GM12878 (cell line): ENCODE measurements at regions of chr11 and their contacts with region 1.

Region 1: DNA sequence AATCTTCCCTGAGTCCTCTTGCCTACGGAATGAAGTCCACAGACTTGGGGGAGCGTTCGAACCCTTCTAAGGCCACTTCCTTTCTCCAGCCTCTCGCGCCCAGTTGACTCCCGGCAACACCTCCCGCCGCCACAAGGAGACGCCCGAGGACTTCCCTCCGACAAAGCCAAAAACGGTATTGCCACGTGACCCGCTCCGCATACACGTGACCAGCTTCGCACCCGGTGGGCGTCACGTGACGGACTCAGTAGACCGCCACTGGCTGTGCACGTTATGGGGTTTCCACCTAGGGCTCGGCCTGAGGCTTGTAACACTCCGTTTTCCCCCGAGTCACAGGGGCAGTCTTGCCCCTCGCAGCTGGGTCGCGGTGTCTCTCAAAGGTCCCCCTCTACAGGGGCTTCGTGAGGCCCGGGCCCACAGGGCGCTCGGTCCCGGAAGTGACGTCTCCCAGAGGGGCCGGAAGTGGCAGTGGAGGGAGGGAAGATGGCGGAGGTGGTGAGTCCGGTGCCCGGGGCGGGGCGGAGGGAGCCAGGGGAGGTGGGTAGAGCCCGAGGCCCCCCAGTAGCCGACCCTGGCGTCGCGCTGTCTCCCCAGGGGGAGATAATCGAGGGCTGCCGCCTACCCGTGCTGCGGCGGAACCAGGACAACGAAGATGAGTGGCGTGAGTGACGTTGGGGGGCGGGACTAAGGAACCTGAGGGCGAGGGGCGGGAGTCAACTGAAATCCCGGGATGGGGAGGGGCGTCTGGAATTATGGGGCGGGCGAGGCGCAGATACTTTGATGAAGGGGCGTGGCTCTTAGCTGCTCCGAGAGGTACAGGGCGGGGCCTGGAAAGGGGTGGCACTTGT is at the start of gene KAT5:
- DNase-seq: peak; percentile 94
- ATAC-seq: peak; percentile 89
- H3K4me3 ChIP-seq: peak within 1 kb of the TSS; percentile 85
- H3K27ac ChIP-seq: peak within 1 kb of the TSS; percentile 99
- H3K4me1 ChIP-seq: peaks cover 8% of the 10 kb centered on the region
- H3K27me3 ChIP-seq: no peaks in the 10 kb centered on the region
- CTCF ChIP-seq: peak; percentile 99 to 100 (median 100); a peak in 5 of 6 replicates
- EP300 ChIP-seq: peak in 1 of 2 experiments; percentile 16; a peak in 1 of 4 replicates
- POLR2A ChIP-seq: peak; percentile 92
- RAD21 ChIP-seq: peak; percentile 90
- polyA plus RNA-seq, gene KAT5: 3.4 to 10.2 TPM

Region 2: DNA sequence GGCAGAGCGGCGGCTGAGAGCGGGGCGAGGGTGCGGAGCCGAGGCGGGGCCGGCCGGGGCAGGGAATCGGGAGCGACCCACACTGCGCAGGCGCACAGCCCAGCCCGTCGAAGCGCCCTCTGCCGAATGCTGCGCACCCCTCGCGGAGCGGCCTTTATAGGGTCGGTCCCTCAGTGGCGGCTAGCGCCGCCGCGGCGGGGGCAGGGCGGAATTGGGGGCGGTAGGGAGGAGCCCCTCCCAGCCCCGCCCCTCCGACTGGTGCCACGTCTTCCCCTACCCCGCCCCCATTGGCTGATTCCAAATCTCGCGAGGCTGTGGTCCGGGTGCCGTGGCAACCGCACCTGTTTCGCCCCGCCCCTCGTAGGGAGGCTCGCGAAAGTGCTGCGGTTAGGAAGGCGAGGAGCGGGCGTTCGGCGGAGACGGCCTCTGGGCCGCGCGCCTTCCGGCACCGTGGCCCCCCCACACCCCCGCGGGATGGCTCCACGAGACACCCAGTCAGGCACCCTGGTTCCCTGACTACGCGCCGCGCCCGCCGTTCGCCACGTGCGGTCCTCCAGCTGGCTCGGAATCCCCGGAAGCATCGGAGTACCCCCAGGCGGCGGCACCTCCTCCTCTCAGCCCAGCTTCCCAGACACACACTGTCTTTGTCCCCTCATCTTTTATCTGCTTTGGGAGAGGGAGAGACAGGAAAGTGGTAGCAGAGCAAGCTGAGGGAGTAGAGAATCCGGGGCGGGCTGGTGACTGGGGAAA is 833.3 kb before region 1 on chr11 and contains the start of gene EHD1:
- CTCF ChIA-PET with region 1: no interaction called
- POLR2A ChIA-PET with region 1: no interaction called
- RAD21 ChIA-PET with region 1: no interaction called
- SMC1A ChIA-PET with region 1: no interaction called
- in situ Hi-C with region 1: no loop called
- intact Hi-C with region 1: loop called (anchors 10 kb)
- DNase-seq: peak; percentile 92
- ATAC-seq: peak; percentile 78
- H3K4me3 ChIP-seq: peak within 1 kb of the TSS; percentile 96
- H3K27ac ChIP-seq: peak within 1 kb of the TSS; percentile 97
- H3K4me1 ChIP-seq: peaks cover 30% of the 10 kb centered on the region
- H3K27me3 ChIP-seq: no peaks in the 10 kb centered on the region
- CTCF ChIP-seq: peak; percentile 41 to 91 (median 54); a peak in 5 of 6 replicates
- EP300 ChIP-seq: 0 out of 4 replicates have a peak, but pooled peaks of 1 of the 2 experiments have one; percentile 35
- POLR2A ChIP-seq: peak; percentile 100
- RAD21 ChIP-seq: no peak
- polyA plus RNA-seq, gene EHD1: 1.0 to 2.2 TPM

Region 3: GRCh38 chr11:65662799-65663638 is 49.0 kb before region 1 on chr11 and contains the start of gene RELA:
- CTCF ChIA-PET with region 1: interaction called, 13 read pairs
- POLR2A ChIA-PET with region 1: interaction called, 6 read pairs
- RAD21 ChIA-PET with region 1: interaction called, 6 read pairs
- SMC1A ChIA-PET with region 1: interaction called, 3 read pairs
- in situ Hi-C with region 1: no loop called
- intact Hi-C with region 1: no loop called
- DNase-seq: no peak
- ATAC-seq: peak; percentile 84
- H3K4me3 ChIP-seq: peak within 1 kb of the TSS; percentile 91
- H3K27ac ChIP-seq: peak within 1 kb of the TSS; percentile 98
- H3K4me1 ChIP-seq: peaks cover 9% of the 10 kb centered on the region
- H3K27me3 ChIP-seq: no peaks in the 10 kb centered on the region
- CTCF ChIP-seq: no peak
- EP300 ChIP-seq: 0 out of 4 replicates have a peak, but pooled peaks of 1 of the 2 experiments have one; percentile 24
- POLR2A ChIP-seq: peak; percentile 79
- RAD21 ChIP-seq: no peak
- polyA plus RNA-seq, gene RELA: 5.1 to 12.8 TPM

Region 4: DNA sequence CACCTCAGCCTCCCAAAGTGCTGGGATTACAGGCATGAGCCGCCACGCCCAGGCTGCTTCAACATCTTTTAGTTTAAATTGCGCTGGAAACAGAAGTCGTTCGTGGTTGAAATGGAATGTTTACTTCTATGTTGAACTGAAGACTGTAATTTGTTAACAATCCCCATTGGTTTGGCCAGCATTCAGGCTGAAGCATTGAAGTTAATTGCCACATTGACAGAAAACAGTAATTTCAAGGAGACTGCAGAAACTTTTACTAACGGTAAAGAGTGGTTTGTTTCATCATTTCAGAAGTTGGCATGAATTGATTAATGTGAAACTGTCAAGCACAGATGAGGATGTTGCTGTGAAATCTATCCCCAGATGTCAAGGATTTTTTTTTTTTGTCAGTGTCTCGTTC is 54.5 kb after region 1 on chr11:
- CTCF ChIA-PET with region 1: interaction called, 35 read pairs
- POLR2A ChIA-PET with region 1: interaction called, 6 read pairs
- RAD21 ChIA-PET with region 1: interaction called, 6 read pairs
- SMC1A ChIA-PET with region 1: interaction called, 10 read pairs
- in situ Hi-C with region 1: no loop called
- intact Hi-C with region 1: no loop called
- DNase-seq: no peak
- ATAC-seq: no peak; the same call in 2 of the 3 replicates
- H3K4me3 ChIP-seq: no peak overlapping the region
- H3K27ac ChIP-seq: no peak overlapping the region
- H3K4me1 ChIP-seq: no peaks in the 10 kb centered on the region
- H3K27me3 ChIP-seq: no peaks in the 10 kb centered on the region
- CTCF ChIP-seq: no peak
- EP300 ChIP-seq: no peak
- POLR2A ChIP-seq: no peak
- RAD21 ChIP-seq: no peak

Region 5: DNA sequence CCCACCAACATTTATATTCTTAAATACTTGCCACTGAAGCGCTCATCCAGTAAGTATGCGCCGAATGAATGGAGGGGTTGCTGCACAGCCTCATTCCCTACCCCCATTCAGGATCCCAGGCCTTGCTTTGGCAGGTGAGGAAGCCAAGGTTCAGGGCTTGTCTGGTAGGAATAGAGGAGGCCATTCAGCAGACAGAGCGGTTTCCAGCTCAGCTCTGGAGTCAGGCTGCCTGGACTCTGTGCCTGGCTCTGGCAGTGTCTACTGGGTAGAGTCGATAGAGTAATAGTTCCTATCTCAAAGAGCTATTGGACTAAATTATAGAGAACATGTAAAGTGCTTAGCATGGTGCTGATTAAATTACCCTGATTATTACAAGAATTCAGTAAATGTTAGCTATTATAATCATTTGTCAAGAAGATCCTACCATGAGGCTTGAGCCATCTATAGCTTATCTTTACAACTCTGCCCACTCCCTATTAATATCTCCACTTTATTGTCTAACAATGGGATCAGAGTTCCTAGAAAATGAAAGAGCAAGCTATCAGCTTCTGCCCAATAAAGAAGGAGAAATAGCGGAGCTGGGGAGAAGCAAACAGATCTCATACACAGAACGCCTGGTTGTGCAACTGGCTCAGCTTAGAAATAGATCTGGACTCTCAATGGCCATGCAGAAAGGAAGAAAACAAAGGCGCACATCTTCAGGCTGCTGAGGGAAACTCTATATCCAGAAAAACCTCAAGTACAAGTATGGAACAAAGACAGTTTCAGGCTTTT is 115.1 kb after region 1 on chr11:
- CTCF ChIA-PET with region 1: interaction called, 20 read pairs
- POLR2A ChIA-PET with region 1: interaction called, 3 read pairs
- RAD21 ChIA-PET with region 1: no interaction called
- SMC1A ChIA-PET with region 1: interaction called, 3 read pairs
- in situ Hi-C with region 1: loop called (anchors 5 kb)
- intact Hi-C with region 1: no loop called
- DNase-seq: no peak
- ATAC-seq: no peak
- H3K4me3 ChIP-seq: no peak overlapping the region
- H3K27ac ChIP-seq: no peak overlapping the region
- H3K4me1 ChIP-seq: no peaks in the 10 kb centered on the region
- H3K27me3 ChIP-seq: 0 out of 4 replicates have a peak, but pooled peaks cover 0 to 3% of the 10 kb centered on the region in 2 experiments
- CTCF ChIP-seq: no peak
- EP300 ChIP-seq: no peak
- POLR2A ChIP-seq: no peak
- RAD21 ChIP-seq: no peak

Region 6: GRCh38 chr11:65988791-65989592 is 277.0 kb after region 1 on chr11:
- CTCF ChIA-PET with region 1: interaction called, 6 read pairs
- POLR2A ChIA-PET with region 1: no interaction called
- RAD21 ChIA-PET with region 1: interaction called, 7 read pairs
- SMC1A ChIA-PET with region 1: interaction called, 5 read pairs
- in situ Hi-C with region 1: loop called (anchors 5 kb)
- intact Hi-C with region 1: loop called (anchors 2 kb)
- DNase-seq: peak; percentile 90
- ATAC-seq: peak; percentile 100
- H3K4me3 ChIP-seq: no peak overlapping the region
- H3K27ac ChIP-seq: no peak overlapping the region
- H3K4me1 ChIP-seq: no peaks in the 10 kb centered on the region
- H3K27me3 ChIP-seq: no peaks in the 10 kb centered on the region
- CTCF ChIP-seq: peak; percentile 92 to 100 (median 99); a peak in 5 of 6 replicates
- EP300 ChIP-seq: no peak
- POLR2A ChIP-seq: no peak; the same call in 1 of the 2 replicates
- RAD21 ChIP-seq: peak; percentile 94